Left cardiac atrium (tissue), 4 donors: ENCODE measurements at regions of chr12 and their contacts with region 1.

Region 1: DNA sequence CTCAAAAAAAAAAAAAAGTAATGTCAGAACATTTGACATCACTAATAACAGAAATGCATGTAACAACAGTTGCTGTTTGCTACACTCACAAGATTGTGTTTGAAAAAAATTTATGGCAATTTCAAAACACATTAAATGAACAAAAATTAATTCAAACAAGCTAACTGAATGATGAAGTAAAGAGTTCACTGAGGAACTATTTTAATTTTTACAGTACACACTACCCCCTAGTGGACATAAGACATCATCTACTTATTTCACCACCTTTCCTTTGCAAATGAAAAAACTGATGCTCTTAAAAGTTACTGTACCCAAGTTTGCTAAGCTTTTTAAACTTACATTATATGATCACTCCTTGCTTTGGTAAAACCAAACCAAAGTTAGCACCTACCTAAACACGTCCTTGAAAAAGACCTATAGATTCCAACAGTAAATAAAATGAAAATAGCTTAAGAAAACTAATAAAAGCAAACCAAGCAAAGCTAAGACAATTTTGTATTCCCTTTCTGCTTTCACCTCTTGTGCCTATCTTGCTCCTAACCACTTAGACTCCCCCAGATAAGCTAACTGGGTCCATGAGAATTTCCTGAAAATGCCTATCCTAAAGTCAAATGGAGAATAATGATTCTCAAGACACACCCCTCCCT is 22.2 kb downstream of the UBE2N start:
- DNase-seq: no peak
- ATAC-seq: peak; percentile 43 to 56

Region 2: DNA sequence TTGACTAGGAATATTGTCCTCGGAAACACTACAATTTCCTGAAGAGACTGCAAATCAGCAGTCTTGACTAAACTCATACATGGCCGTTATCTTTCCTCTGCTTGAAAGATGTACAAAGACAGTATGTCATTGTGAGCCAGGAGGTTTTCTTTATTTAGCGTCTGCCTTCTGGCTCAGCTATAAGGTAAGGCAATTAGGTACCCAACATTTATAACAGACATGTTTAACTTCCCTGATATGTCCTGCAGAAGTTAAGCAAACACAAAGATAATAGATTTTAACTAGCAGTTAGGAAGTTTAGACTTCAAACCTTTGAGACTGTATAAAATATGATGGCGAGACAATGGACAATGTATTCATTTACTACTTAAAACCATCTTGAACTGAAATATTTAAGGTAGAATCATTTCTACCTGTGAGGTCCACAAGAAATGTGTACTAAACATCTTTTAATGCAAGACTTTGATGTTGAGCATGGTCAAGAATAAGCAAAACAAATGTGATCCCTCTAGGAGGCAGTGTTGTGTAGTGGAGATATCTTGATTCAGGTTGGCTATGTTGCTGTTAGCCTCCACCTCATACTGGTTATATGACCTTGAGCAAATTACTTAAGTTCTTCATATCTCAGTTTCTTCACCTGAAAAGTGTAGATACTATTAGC is 394.2 kb before region 1 on chr12:
- intact Hi-C with region 1: loop called in 1 of 2 experiments (anchors 10 kb)
- DNase-seq: no peak
- ATAC-seq: peak in 1 of 2 donors; percentile 58